Gastrocnemius medialis (tissue), 4 donors: ENCODE measurements at regions of chr11 and their contacts with region 1.

Region 1: GRCh38 chr11:568306-569157 is 7.7 kb upstream of the PHRF1 start:
- DNase-seq: peak; percentile 84 to 95
- ATAC-seq: peak; percentile 84 to 89
- H3K4me3 ChIP-seq: peak overlapping the region; percentile 62 to 83 (median 74)
- H3K27ac ChIP-seq: peak overlapping the region; percentile 85 to 97 (median 91)
- H3K4me1 ChIP-seq: peaks cover 8 to 24% of the 10 kb centered on the region in 2 donors
- H3K27me3 ChIP-seq: no peaks in the 10 kb centered on the region
- CTCF ChIP-seq: peak in 1 of 5 experiments; percentile 24
- POLR2A ChIP-seq: peak; percentile 79 to 83

Region 2: DNA sequence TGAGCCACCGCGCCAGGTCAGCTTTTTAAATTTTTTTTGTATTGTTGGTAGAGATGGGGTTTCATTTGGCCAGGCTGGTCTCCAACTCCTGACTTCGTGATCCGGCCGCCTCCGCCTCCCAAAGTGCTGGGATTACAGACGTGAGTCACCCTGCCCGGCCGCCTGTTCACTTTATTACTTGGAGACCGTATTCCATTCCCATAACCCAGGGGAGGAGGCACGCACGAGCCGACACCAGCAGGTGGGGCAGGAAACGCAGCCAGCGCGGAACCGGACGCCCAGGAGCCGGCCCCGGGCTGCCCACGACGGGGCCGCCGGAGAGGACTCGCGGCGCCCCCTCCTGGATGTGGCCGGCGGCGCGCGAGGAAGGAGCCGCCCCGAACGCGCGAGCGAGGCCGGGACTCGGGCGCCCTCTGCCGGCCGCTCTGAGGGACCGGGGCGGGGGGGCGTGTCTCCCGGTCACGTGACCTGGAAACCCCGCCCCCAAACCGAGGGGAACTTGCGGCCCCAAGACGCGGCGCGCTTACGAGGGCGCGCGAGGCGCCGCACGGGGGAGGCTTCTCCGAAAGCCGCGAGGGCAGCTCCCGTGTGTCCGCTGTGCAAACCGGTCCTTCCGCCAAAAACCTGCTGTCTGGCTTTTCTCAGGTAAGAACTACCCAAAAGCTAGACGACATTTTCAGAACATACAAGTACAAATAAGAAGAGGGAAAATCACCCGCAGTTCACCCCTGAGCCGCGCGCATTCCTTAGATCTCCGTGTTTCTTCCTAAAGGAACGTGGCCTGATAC is 49.9 kb before region 1 on chr11:
- in situ Hi-C with region 1: no loop called
- intact Hi-C with region 1: loop called (anchors 2 kb)
- DNase-seq: peak; percentile 91 to 98
- ATAC-seq: peak; percentile 96 to 97
- H3K4me3 ChIP-seq: peak overlapping the region; percentile 37 to 51 (median 44)
- H3K27ac ChIP-seq: peak overlapping the region; percentile 90 to 97 (median 94)
- H3K4me1 ChIP-seq: peaks cover 0 to 4% of the 10 kb centered on the region in 2 donors
- H3K27me3 ChIP-seq: no peaks in the 10 kb centered on the region
- CTCF ChIP-seq: peak; percentile 85 to 100 (median 100)
- POLR2A ChIP-seq: peak; percentile 30 to 60

Region 3: GRCh38 chr11:615504-616319 is 47.2 kb after region 1 on chr11 and contains the start of gene IRF7:
- in situ Hi-C with region 1: no loop called
- intact Hi-C with region 1: loop called (anchors 2 kb)
- DNase-seq: peak; percentile 87 to 92
- ATAC-seq: peak; percentile 61 to 75
- H3K4me3 ChIP-seq: peak within 1 kb of the TSS; percentile 66 to 85 (median 77)
- H3K27ac ChIP-seq: peak within 1 kb of the TSS; percentile 91 to 94 (median 93)
- H3K4me1 ChIP-seq: peaks cover 40 to 43% of the 10 kb centered on the region in 2 donors
- H3K27me3 ChIP-seq: no peaks in the 10 kb centered on the region
- CTCF ChIP-seq: no peak
- POLR2A ChIP-seq: peak; percentile 84 to 92
- total RNA-seq, gene IRF7: 15.5 to 37.1 (median 26.3) TPM

Region 4: DNA sequence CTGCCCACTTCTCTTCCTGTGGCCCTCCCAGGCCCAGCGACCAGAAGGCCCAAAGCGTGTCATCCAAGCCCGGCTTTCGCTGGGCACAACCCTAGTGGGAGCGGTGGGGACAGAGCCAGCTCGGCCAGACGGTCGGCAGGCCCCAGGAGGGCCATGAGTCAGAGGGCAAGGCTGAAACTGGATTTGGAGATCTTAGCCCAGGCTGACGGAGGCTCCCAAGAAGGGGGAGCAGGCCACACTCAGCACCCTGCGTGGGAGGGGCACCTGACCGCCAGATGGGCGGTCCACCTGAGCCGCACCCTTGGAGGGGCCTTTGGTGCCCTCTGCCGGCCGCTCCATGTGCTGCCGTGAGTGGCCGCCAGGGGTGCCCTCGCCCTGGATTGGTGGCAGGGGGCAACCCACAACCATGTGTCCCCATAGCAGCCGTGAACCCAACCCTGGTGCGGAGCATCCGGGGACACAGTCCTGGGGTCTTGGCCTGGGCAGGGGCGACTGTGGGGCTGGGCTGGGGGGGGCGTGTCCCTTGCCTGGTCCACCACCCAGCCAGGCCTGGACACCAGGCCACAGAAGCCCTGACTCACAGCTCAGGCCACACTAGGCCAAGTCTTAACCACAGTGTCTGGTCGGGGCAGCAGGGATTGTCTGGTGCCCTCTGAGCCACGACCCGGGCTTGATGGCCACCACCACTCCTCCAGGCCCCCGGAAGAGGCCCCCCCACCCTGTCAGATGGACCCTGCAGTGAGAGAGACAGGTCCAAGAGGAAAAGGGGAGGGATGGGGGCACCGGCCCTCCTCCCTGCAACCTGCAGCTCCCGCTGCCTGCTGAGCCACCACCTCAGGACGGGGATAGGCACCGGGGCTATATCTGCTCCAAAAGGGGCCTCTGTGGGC is 159.6 kb after region 1 on chr11:
- in situ Hi-C with region 1: loop called (anchors 25 kb)
- intact Hi-C with region 1: no loop called
- DNase-seq: peak; percentile 48 to 82
- ATAC-seq: peak; percentile 44 to 87
- H3K4me3 ChIP-seq: peak overlapping the region in 2 of 4 donors; percentile 7 to 31
- H3K27ac ChIP-seq: peak overlapping the region in 1 of 4 donors; percentile 14
- H3K4me1 ChIP-seq: peaks cover 0 to 19% of the 10 kb centered on the region in 2 donors
- H3K27me3 ChIP-seq: peaks cover 27 to 39% (median 35%) of the 10 kb centered on the region in 3 donors
- CTCF ChIP-seq: peak; percentile 96 to 99 (median 97)
- POLR2A ChIP-seq: no peak

Region 5: DNA sequence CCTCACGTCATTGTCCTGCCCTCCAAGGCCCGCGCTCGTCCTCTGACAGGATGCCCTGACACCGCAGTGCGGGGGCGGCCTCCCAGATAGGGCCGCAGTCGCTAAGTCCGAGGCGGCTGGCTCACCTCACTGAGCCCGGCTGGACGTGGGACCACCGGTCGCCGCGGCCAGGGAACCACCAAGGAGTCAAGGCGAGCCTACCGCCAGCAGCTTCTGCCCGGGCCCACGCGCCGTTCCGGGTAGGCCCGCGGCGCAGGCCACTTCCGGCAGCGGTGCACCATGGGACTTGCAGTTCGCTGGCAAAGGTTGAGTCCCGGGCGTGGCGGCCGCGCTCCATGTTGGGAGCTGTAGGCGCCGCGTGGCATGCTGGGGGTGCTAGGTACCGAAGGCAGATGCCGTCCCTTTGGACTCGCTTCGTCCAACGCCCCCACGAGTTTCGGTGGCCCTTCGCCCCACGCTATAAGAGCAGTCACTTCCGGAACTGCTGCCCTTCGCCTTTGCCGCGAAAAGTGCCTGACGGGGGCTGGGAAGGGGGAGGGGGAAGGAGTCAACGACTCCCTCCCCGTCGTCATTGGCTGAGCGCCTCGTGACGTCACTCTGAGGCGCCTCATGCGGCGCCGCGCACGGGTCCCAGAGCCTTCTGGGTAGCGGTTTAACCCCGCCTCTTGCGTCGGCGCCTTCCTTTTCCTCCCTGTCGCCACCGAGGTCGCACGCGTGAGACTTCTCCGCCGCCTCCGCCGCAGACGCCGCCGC is 240.9 kb after region 1 on chr11 and contains the start of gene RPLP2:
- in situ Hi-C with region 1: no loop called
- intact Hi-C with region 1: loop called (anchors 5 kb)
- DNase-seq: peak; percentile 97 to 98
- ATAC-seq: peak; percentile 83 to 85
- H3K4me3 ChIP-seq: peak within 1 kb of the TSS; percentile 66 to 97 (median 78)
- H3K27ac ChIP-seq: peak within 1 kb of the TSS; percentile 97 to 100 (median 100)
- H3K4me1 ChIP-seq: peaks cover 38 to 41% of the 10 kb centered on the region in 2 donors
- H3K27me3 ChIP-seq: no peaks in the 10 kb centered on the region
- CTCF ChIP-seq: peak in 1 of 5 experiments; percentile 10
- POLR2A ChIP-seq: peak; percentile 90 to 95
- total RNA-seq, gene RPLP2: 314 to 600 (median 440) TPM